MCF 10A (cell line): ENCODE measurements at regions of chr20 and their contacts with region 1.

Region 1: GRCh38 chr20:16761305-16761829 is 13.2 kb downstream of the OTOR start:
- DNase-seq: peak; percentile 72
- H3K4me3 Mint-ChIP-seq: no peak overlapping the region
- H3K27ac Mint-ChIP-seq: no peak overlapping the region
- H3K4me1 Mint-ChIP-seq: no peaks in the 10 kb centered on the region
- H3K27me3 Mint-ChIP-seq: peaks cover 29% of the 10 kb centered on the region
- CTCF ChIP-seq: peak; percentile 78

Region 2: DNA sequence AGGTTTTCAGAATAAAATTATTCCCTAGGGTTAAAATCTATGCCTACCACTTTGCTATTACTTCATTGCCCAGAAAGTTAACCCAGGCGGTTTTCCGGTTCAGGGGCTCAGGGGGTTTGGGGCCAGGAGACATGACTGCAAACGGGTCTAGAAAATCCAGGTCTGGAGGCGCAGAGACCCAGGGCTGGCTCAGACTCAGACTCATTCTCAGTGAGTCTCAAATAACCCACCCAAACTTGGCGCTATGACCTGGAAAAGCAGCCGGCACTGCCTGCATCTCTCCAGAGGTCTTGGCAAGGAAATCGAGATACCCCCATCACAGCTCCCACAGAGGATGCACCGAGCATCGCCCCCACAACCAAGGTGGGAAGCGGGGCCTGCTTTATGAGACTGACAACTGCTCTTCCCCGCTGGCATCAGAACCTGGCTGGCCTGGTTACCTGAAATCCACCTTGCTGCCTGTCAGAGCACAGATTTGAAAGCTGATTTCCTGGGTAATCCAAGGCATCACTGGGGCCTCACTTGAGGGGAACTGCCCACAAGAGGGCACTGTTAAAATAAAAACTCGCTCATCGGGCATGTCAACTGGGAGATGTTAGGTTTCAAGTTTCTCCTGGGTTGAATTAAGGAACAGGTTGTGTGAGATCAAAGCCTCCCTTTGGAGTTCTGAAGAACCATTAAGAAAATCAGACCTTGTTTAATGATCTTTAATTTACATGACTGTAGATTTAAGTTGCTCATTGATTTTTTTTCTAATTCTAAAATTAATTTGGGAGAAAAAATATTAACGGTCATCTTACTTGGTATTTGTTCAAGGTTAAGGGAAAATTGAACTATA is 243.2 kb before region 1 on chr20:
- CTCF ChIA-PET with region 1: interaction called, 71 read pairs
- POLR2A ChIA-PET with region 1: no interaction called
- intact Hi-C with region 1: loop called (anchors 1 kb)
- DNase-seq: peak; percentile 65
- H3K4me3 Mint-ChIP-seq: no peak overlapping the region
- H3K27ac Mint-ChIP-seq: no peak overlapping the region
- H3K4me1 Mint-ChIP-seq: no peaks in the 10 kb centered on the region
- H3K27me3 Mint-ChIP-seq: no peaks in the 10 kb centered on the region
- CTCF ChIP-seq: peak; percentile 66

Region 3: GRCh38 chr20:16729565-16730456 is 31.6 kb before region 1 on chr20 and contains the start of gene SNRPB2:
- CTCF ChIA-PET with region 1: interaction called, 13 read pairs
- POLR2A ChIA-PET with region 1: interaction called, 4 read pairs
- intact Hi-C with region 1: no loop called
- DNase-seq: peak; percentile 93
- H3K4me3 Mint-ChIP-seq: peak within 1 kb of the TSS; percentile 100
- H3K27ac Mint-ChIP-seq: peak within 1 kb of the TSS; percentile 100
- H3K4me1 Mint-ChIP-seq: peaks cover 16% of the 10 kb centered on the region
- H3K27me3 Mint-ChIP-seq: peaks cover 21% of the 10 kb centered on the region
- CTCF ChIP-seq: no peak
- total RNA-seq, gene SNRPB2: 57.7 and 74.3 TPM in 2 replicates

Region 4: DNA sequence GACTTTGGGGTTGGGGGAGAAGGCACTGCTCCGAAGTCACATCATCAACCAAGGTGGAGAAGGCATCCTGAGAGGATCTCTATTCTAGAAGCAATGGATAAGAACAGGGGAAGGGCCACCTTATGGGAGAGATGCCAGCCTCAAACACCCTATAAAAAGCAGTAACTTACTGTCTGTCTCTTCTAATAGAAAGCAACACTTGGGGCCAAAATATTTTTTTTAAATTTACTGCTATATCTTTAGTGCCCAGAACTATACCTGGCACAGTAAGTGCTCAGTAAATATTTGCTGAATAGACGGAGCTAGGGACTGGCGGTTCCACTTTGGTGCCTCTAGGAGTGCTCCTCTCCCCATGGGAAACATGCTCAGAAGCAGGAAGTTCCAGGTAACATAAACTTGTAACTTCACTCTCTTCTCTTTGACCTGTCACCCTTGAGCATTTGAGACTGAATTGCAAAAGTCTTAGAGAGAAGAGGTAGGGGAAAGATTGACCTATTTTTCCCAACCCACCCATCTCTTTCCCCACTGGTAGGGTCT is 14.0 kb before region 1 on chr20:
- CTCF ChIA-PET with region 1: interaction called, 75 read pairs
- POLR2A ChIA-PET with region 1: interaction called, 4 read pairs
- intact Hi-C with region 1: no loop called
- DNase-seq: no peak
- H3K4me3 Mint-ChIP-seq: no peak overlapping the region
- H3K27ac Mint-ChIP-seq: no peak overlapping the region
- H3K4me1 Mint-ChIP-seq: no peaks in the 10 kb centered on the region
- H3K27me3 Mint-ChIP-seq: no peaks in the 10 kb centered on the region
- CTCF ChIP-seq: no peak

Region 5: GRCh38 chr20:17014217-17014616 is 252.8 kb after region 1 on chr20:
- CTCF ChIA-PET with region 1: no interaction called
- POLR2A ChIA-PET with region 1: no interaction called
- intact Hi-C with region 1: no loop called
- DNase-seq: no peak
- H3K4me3 Mint-ChIP-seq: no peak overlapping the region
- H3K27ac Mint-ChIP-seq: no peak overlapping the region
- H3K4me1 Mint-ChIP-seq: no peaks in the 10 kb centered on the region
- H3K27me3 Mint-ChIP-seq: peaks cover 10% of the 10 kb centered on the region
- CTCF ChIP-seq: no peak

Region 6: DNA sequence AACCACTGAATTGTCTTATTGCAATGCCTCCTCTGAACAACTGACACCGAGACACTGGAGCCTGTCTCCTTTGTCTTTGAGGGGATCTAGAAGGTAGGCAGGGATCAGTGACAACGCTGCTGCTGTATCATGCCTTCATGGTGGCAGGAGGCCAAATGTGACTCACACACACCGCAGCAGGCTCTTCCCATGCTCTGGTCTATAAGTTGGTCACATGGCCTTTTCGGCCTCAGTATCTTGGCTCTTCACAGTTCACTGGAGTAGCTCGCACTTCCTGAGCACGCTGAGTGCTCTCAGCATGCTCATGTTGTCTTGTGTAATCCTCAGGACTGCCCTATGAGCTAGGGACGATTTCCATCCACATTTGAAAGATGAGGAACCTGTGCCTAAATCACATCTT is 298.1 kb after region 1 on chr20:
- CTCF ChIA-PET with region 1: no interaction called
- POLR2A ChIA-PET with region 1: no interaction called
- intact Hi-C with region 1: no loop called
- DNase-seq: peak; percentile 66
- H3K4me3 Mint-ChIP-seq: no peak overlapping the region
- H3K27ac Mint-ChIP-seq: no peak overlapping the region
- H3K4me1 Mint-ChIP-seq: no peaks in the 10 kb centered on the region
- H3K27me3 Mint-ChIP-seq: no peaks in the 10 kb centered on the region
- CTCF ChIP-seq: no peak